Cardiac septum (tissue), 1 donor: ENCODE measurements at regions of chr3 and their contacts with region 1.

Region 1: GRCh38 chr3:37129871-37130270 is 44.5 kb downstream of the LRRFIP2 start:
- DNase-seq: no peak

Region 2: GRCh38 chr3:36911990-36912804 is 217.7 kb before region 1 on chr3:
- intact Hi-C with region 1: no loop called
- DNase-seq: no peak

Region 3: DNA sequence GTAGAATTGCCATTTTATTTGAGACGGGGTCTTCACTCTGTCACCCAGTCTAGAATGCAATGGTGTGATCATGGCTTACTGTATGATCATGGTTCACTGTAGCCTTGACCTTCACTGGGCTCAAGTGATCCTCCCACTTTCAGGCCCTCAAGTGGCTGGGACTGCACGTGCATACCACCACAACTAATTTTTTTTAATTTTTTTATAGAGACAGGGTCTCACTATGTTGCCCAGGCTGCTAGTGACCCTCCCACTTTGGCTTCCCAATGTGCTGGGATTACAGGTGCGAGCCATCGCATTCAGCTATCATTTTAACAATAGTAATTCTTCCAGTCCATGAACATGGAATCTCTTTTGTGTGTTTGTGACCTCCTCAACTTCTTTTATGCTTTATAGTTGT is 148.9 kb before region 1 on chr3:
- intact Hi-C with region 1: no loop called
- DNase-seq: no peak

Region 4: DNA sequence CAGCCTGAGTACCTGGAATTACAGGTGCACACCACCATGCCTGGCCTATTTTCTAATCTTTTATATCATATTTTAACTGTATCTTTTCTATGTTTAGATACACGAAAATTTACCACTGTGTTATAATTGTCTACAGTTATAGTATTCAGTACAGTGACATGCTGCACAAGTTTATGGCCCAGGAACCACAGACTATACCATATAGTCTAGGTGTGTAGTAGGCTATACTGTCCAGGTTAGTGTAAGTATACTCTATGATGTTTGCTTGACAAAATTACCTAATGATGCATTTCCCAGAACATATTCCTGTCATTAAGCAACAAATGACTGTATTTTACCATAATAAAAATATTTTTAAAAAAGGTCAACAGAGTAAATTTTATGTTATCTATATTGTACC is 39.0 kb after region 1 on chr3:
- intact Hi-C with region 1: loop called (anchors 5 kb)
- DNase-seq: no peak